ENCODE measurements at regions of chr7 and their contacts with region 1.

Region 1: DNA sequence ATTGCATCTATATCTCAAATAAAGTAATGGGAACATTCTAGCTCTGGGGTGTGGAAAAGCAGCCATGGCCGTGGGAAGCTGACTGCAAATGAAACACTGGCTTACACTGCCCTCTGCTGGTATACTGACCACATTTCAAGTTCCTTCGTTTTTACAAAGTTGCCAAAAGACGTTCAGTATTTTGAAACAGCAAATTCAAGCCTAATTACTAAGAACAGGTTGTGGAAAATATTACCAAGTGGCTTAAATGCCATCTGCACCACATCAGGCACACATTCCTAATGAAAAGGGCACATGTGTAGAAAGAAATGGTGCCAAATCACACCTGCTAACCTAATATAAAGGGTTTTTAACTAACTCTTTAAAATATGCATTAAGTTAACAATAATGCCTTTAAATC is 83.9 kb downstream of the JAZF1 start:
- DNase-seq: peak; percentile 52 to 64
- H3K4me3 ChIP-seq: no peak overlapping the region
- H3K27ac ChIP-seq: no peak overlapping the region
- H3K4me1 ChIP-seq: 0 out of 2 replicates have a peak, but pooled peaks cover 3% of the 10 kb centered on the region
- H3K27me3 ChIP-seq: no peaks in the 10 kb centered on the region
- CTCF ChIP-seq: peak; percentile 98

Region 2: DNA sequence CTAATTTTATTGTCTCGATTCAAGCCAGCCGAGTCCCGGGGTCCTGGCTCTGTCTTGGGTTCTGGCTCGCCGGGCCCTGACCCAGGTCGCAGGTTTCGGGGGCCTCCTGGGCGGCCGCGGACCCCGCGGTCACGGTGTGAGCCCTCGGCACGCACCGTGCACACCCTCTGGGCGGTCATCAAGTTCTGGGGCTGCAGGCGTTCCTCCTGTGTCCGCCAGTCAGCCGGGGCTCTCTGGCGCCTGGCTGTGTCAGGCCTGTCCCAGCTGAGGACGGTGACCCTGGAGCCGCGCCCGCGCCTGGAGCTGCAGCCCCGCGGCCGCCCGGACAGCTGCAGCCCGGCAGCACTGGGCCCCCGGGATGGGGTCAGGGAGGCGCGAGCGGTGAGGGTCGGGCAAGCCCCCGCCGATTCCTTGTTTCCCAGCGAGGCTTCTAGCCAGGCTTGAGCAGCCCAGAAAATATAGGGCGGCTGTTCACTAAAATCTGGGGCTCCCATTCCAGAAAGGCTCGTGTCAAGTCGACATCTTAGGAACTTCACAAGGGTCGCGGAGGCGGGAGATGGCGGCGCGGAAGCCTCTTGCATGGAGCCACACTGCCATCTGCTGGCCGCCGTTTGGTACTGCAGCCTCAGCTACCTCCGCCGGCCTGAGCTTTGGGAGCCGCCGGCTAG is 936.0 kb before region 1 on chr7:
- CTCF ChIA-PET with region 1: no interaction called
- POLR2A ChIA-PET with region 1: no interaction called
- intact Hi-C with region 1: loop called (anchors 10 kb)
- DNase-seq: peak; percentile 70 to 88
- H3K4me3 ChIP-seq: peak overlapping the region; percentile 71
- H3K27ac ChIP-seq: no peak overlapping the region
- H3K4me1 ChIP-seq: 0 out of 2 replicates have a peak, but pooled peaks cover 3% of the 10 kb centered on the region
- H3K27me3 ChIP-seq: no peaks in the 10 kb centered on the region
- CTCF ChIP-seq: peak; percentile 100

Region 3: DNA sequence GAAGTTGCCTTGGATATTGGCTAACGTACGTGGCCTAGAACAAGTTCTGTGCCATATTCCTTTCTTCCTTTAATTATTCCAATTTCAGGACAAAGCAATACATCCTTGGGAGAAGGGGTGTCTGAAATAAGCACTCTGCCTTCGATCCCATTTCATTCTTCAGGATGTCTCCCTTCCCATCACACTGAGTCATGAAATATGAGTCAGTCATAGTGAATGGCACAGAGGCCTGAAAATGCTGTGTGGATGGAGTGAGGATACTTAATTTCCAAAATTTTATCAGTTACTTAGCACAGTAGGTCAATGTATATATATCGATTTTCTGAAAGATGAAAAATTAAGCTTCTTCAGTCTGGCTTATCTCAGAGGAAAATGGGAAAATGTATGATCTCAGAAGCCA is 834.6 kb before region 1 on chr7:
- CTCF ChIA-PET with region 1: interaction called, 10 read pairs
- POLR2A ChIA-PET with region 1: no interaction called
- intact Hi-C with region 1: no loop called
- DNase-seq: no peak
- H3K4me3 ChIP-seq: no peak overlapping the region
- H3K27ac ChIP-seq: no peak overlapping the region
- H3K4me1 ChIP-seq: peaks cover 22% of the 10 kb centered on the region
- H3K27me3 ChIP-seq: no peaks in the 10 kb centered on the region
- CTCF ChIP-seq: no peak

Region 4: GRCh38 chr7:27453702-27454405 is 642.9 kb before region 1 on chr7:
- CTCF ChIA-PET with region 1: interaction called, 17 read pairs
- POLR2A ChIA-PET with region 1: no interaction called
- intact Hi-C with region 1: no loop called
- DNase-seq: no peak
- H3K4me3 ChIP-seq: no peak overlapping the region
- H3K27ac ChIP-seq: no peak overlapping the region
- H3K4me1 ChIP-seq: no peaks in the 10 kb centered on the region
- H3K27me3 ChIP-seq: no peaks in the 10 kb centered on the region
- CTCF ChIP-seq: no peak

Region 5: DNA sequence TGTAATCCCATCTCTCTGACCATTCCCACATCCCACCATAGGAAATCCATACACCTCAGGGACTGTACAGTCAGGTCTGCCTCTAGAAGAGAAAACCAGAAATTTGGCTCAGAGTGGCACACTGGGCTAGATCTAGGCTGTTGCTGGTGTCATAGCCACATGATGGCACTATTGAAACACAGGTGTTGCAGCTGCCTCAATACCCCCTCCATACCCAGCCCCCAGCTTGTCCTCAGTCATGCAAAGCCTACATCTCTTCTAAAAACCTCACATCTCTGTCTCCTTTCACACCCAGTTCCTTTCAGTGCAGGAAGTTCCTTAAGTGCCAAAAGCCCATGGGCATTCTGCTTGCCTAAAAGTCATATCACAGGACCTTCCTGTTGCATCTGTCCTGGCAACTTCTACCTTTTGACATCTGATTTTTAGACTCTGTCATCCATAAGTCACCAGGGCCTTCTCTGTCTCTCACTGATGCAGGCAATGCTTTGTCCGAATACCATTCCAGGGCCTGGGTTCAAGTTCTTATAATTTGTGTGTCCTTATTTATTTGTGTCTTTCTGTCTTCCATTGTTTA is 407.0 kb before region 1 on chr7:
- CTCF ChIA-PET with region 1: interaction called, 4 read pairs
- POLR2A ChIA-PET with region 1: no interaction called
- intact Hi-C with region 1: loop called (anchors 1 kb)
- DNase-seq: peak; percentile 49 to 59
- H3K4me3 ChIP-seq: no peak overlapping the region
- H3K27ac ChIP-seq: no peak overlapping the region
- H3K4me1 ChIP-seq: peaks cover 16% of the 10 kb centered on the region
- H3K27me3 ChIP-seq: no peaks in the 10 kb centered on the region
- CTCF ChIP-seq: peak; percentile 69

Region 6: GRCh38 chr7:27928001-27928400 is 168.7 kb before region 1 on chr7:
- CTCF ChIA-PET with region 1: no interaction called
- POLR2A ChIA-PET with region 1: interaction called, 20 read pairs
- intact Hi-C with region 1: no loop called
- DNase-seq: no peak
- H3K4me3 ChIP-seq: no peak overlapping the region
- H3K27ac ChIP-seq: no peak overlapping the region
- H3K4me1 ChIP-seq: no peaks in the 10 kb centered on the region
- H3K27me3 ChIP-seq: no peaks in the 10 kb centered on the region
- CTCF ChIP-seq: no peak

Region 7: GRCh38 chr7:28005075-28005846 is 91.5 kb before region 1 on chr7:
- CTCF ChIA-PET with region 1: no interaction called
- POLR2A ChIA-PET with region 1: no interaction called
- intact Hi-C with region 1: no loop called
- DNase-seq: no peak
- H3K4me3 ChIP-seq: no peak overlapping the region
- H3K27ac ChIP-seq: no peak overlapping the region
- H3K4me1 ChIP-seq: no peaks in the 10 kb centered on the region
- H3K27me3 ChIP-seq: no peaks in the 10 kb centered on the region
- CTCF ChIP-seq: no peak

Region 8: GRCh38 chr7:28083998-28084985 is 12.4 kb before region 1 on chr7:
- CTCF ChIA-PET with region 1: interaction called, 16 read pairs
- POLR2A ChIA-PET with region 1: no interaction called
- intact Hi-C with region 1: no loop called
- DNase-seq: no peak
- H3K4me3 ChIP-seq: no peak overlapping the region
- H3K27ac ChIP-seq: no peak overlapping the region
- H3K4me1 ChIP-seq: no peaks in the 10 kb centered on the region
- H3K27me3 ChIP-seq: no peaks in the 10 kb centered on the region
- CTCF ChIP-seq: no peak

Region 9: GRCh38 chr7:28116041-28116440 is 19.3 kb after region 1 on chr7:
- CTCF ChIA-PET with region 1: no interaction called
- POLR2A ChIA-PET with region 1: no interaction called
- intact Hi-C with region 1: no loop called
- DNase-seq: no peak
- H3K4me3 ChIP-seq: no peak overlapping the region
- H3K27ac ChIP-seq: no peak overlapping the region
- H3K4me1 ChIP-seq: peaks cover 10% of the 10 kb centered on the region
- H3K27me3 ChIP-seq: no peaks in the 10 kb centered on the region
- CTCF ChIP-seq: no peak